PC-9 (cell line): ENCODE measurements at regions of chr19 and their contacts with region 1.

Region 1: DNA sequence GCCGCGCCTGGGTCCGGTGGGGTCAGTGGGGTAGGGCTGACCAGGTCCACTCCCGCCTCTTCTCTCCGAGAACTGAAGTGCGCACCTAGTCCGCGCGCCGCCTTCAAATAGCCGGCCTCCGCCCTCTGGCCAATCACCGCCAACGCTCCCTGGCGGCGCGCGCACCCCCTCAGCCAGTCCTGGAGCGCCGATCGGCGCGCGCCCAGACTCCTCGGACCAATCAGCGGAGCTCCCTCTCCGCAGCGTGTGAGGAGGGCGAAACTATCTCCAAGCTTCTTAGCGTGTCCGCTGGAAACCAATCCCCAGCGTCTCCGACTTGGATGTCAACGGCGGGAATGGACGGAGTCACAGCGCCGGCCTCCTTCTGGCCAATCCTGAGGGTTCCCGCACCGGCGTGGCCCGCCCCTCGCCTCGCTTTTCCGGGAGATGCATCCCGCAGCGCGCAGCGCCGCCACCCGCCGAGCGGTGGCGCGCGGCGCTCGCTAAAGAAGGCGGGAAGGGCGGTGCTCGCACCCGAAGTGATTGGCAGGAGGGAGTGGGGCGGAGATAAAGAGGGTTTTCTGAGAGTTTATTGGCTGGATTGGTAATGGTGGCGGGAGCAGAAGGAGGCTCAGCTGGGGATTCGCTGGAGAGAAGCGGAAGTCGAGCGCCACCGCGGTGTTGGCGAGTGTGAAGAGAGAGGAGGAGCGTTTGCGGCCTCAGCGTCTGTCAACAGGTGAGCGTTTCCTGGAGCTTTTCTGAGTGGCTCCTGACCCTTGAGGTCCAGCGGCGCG is at the start of gene ASF1B:
- DNase-seq: peak; percentile 98 to 99
- H3K4me3 ChIP-seq: peak within 1 kb of the TSS; percentile 79
- H3K27ac ChIP-seq: peak within 1 kb of the TSS; percentile 80
- H3K4me1 ChIP-seq: peaks cover 29% of the 10 kb centered on the region
- H3K27me3 ChIP-seq: no peaks in the 10 kb centered on the region
- CTCF ChIP-seq: peak; percentile 65
- total RNA-seq, gene ASF1B: 67.4 and 71.2 TPM in 2 replicates

Region 2: GRCh38 chr19:13833330-13834243 is 303.1 kb before region 1 on chr19:
- CTCF ChIA-PET with region 1: interaction called, 11 read pairs
- POLR2A ChIA-PET with region 1: no interaction called
- intact Hi-C with region 1: no loop called
- DNase-seq: peak; percentile 87 to 95
- H3K4me3 ChIP-seq: peak overlapping the region; percentile 22; the same call in 1 of the 2 replicates
- H3K27ac ChIP-seq: peak overlapping the region; percentile 59
- H3K4me1 ChIP-seq: peaks cover 52% of the 10 kb centered on the region
- H3K27me3 ChIP-seq: no peaks in the 10 kb centered on the region
- CTCF ChIP-seq: no peak; the same call in none of the 2 replicates

Region 3: DNA sequence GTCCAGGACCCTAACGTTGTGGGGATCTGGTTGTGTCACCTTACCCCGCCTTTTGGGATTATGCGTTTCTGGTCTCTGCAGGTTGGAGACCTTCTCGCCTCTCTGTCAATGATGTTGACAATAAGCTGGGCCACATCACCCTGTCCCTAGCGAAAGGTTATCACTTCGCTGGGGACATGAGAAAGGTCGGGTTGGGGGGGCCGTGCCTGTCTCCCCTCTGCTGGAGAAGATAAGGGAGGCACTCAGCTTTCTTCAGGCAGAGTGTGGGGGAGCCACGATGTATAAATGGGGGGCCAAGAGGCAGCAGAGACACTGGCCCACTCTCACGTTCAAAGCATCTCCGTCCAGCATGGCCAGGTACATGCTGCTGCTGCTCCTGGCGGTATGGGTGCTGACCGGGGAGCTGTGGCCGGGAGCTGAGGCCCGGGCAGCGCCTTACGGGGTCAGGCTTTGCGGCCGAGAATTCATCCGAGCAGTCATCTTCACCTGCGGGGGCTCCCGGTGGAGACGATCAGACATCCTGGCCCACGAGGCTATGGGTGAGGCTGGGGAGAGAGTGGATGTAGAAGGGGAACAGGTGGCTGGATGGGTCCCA is 108.7 kb before region 1 on chr19 and contains the start of gene RLN3:
- CTCF ChIA-PET with region 1: no interaction called
- POLR2A ChIA-PET with region 1: no interaction called
- intact Hi-C with region 1: no loop called
- DNase-seq: no peak
- H3K4me3 ChIP-seq: no peak within 1 kb of the TSS
- H3K27ac ChIP-seq: no peak within 1 kb of the TSS
- H3K4me1 ChIP-seq: peaks cover 24% of the 10 kb centered on the region
- H3K27me3 ChIP-seq: no peaks in the 10 kb centered on the region
- CTCF ChIP-seq: no peak
- total RNA-seq, gene RLN3: not detected in 2 replicates

Region 4: DNA sequence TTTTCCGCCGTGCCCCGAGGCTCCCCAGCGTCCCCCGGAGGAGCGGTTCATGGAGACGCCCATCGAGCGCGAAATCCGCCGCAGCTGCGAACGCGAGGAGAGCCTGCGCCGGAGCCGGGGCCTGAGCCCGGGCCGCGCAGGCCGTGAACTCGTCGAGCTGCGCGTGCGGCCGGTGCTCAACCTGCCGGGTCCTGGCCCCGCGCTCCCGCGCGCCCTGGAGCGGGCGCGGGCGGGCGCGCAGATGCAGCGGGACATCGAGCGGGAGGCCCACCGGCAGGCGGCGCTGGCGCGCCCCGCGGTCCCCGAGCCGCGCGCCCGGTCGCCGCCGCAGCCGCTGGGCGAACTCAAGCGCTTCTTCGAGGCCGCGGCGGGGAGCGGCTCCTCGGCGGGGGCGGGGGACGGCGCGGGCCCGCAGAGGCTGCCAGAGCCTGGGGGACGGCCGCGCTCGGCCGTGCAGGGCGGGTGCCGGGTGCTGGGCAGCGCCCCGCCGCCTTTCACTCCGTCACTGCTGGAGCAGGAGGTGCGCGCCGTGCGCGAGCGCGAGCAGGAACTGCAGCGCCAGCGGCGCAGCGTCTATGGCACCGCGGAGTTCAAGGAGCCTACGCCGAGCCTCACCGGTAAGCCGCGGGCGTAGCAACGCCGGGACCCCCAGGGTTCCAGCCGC is 63.3 kb before region 1 on chr19:
- CTCF ChIA-PET with region 1: interaction called, 7 read pairs
- POLR2A ChIA-PET with region 1: no interaction called
- intact Hi-C with region 1: loop called (anchors 1 kb)
- DNase-seq: peak; percentile 61 to 78
- H3K4me3 ChIP-seq: peak overlapping the region; percentile 72
- H3K27ac ChIP-seq: no peak overlapping the region
- H3K4me1 ChIP-seq: 0 out of 2 replicates have a peak, but pooled peaks cover 10% of the 10 kb centered on the region
- H3K27me3 ChIP-seq: no peaks in the 10 kb centered on the region
- CTCF ChIP-seq: no peak

Region 5: DNA sequence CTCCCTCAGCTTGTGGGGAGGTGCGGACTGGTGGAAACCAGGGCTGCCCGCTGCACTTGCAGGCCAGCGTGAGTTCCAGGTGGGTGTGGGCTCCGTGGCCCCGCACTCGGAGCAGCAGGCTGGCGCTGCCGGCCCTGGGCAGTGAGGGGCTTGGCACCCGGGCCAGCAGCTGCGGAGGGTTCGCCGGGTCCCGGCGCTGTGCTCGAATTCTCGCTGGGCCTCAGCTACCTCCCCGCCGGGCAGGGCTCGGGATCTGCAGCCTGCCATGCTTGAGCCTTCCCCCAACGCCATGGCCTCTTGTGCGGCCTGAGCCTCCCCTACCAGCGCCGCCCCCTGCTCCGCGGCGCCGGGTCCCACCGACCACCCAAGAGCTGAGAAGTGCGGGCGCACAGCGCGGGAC is 140.9 kb after region 1 on chr19:
- CTCF ChIA-PET with region 1: no interaction called
- POLR2A ChIA-PET with region 1: no interaction called
- intact Hi-C with region 1: no loop called
- DNase-seq: no peak
- H3K4me3 ChIP-seq: no peak overlapping the region
- H3K27ac ChIP-seq: no peak overlapping the region
- H3K4me1 ChIP-seq: no peaks in the 10 kb centered on the region
- H3K27me3 ChIP-seq: peaks cover 41% of the 10 kb centered on the region
- CTCF ChIP-seq: no peak

Region 6: DNA sequence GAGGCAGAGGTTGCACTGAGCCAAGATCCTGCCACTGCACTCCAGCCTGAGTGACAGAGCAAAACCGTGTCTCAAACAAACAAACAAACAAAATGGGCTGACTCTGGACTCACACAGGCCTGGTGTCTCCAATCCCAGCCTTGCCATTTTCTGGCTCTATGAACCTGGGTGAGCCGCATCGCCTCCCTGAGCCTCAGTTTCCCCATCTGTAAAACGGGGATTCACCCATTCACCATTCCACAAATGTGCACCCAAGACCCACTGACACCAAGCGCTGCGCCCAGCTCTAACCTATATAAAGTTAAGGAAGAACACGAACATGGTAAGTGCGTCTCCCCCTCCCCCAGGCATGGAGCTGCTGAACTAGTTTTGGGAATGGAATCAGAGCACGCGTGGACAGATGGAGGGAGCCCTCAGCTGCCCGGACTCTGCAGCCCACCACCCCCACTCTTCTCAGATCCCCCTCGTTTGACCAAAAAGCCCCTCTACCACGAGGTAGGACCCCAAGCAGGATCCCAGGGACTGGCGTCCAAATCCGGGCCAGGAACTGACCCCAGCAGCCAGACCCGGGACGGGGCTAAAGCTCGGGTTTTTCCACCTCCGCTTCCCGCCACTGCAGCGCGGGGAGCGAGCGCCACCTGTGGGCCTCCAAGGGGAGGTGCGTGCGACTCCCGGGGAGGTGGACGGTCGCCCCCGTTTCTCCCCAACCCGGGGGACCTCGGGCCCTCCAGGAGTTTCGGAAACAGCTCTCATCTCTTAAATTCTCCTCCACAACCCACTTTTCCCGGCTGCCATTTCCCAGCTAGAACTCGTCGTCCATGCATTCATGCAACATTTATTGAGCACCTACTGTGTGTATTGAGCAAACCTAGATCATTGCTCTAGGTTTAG is 211.5 kb after region 1 on chr19:
- CTCF ChIA-PET with region 1: no interaction called
- POLR2A ChIA-PET with region 1: no interaction called
- intact Hi-C with region 1: loop called (anchors 2 kb)
- DNase-seq: peak in 1 of 2 experiments; percentile 65
- H3K4me3 ChIP-seq: peak overlapping the region; percentile 29; the same call in 1 of the 2 replicates
- H3K27ac ChIP-seq: no peak overlapping the region
- H3K4me1 ChIP-seq: no peaks in the 10 kb centered on the region
- H3K27me3 ChIP-seq: no peaks in the 10 kb centered on the region
- CTCF ChIP-seq: peak; percentile 99

Region 7: DNA sequence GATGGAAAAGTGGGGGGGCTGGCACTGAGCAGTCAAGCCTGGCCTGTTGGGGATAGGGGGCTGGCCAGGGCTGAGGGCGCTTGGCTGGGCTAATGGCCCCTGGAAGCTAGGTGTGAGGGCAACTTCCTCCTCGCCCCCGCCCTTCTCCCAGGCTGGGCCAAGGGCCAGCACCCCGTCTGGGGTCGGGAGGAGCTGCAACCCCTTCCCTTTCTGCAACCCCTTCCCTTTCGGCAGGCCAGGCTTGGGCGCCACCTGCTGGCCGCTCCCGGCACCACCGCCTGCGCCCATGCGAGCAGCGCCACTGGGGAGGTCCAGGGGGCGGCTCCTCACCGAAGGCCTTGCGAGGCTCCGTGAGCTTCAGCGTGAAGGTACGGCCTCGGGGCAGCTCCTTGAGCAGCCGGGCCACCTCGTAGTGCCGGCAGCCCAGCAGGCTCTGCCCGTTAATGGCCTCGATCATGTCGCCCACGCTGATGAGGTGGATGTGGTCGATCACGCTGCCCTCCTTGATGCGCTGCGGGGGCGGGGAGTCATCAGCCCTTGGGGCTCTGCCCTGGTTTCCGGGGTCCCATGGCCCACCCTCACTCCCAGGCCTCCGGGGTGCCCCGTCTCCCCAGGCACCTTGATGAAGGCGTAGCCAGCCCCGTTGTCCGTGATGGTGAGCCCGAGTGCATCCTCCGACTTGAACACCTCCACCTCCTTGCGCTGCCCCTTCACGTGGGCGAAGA is 343.4 kb after region 1 on chr19:
- CTCF ChIA-PET with region 1: no interaction called
- POLR2A ChIA-PET with region 1: interaction called, 4 read pairs
- intact Hi-C with region 1: loop called (anchors 5 kb)
- DNase-seq: peak in 1 of 2 experiments; percentile 47
- H3K4me3 ChIP-seq: no peak overlapping the region
- H3K27ac ChIP-seq: no peak overlapping the region
- H3K4me1 ChIP-seq: peaks cover 30% of the 10 kb centered on the region
- H3K27me3 ChIP-seq: no peaks in the 10 kb centered on the region
- CTCF ChIP-seq: peak; percentile 94

Region 8: DNA sequence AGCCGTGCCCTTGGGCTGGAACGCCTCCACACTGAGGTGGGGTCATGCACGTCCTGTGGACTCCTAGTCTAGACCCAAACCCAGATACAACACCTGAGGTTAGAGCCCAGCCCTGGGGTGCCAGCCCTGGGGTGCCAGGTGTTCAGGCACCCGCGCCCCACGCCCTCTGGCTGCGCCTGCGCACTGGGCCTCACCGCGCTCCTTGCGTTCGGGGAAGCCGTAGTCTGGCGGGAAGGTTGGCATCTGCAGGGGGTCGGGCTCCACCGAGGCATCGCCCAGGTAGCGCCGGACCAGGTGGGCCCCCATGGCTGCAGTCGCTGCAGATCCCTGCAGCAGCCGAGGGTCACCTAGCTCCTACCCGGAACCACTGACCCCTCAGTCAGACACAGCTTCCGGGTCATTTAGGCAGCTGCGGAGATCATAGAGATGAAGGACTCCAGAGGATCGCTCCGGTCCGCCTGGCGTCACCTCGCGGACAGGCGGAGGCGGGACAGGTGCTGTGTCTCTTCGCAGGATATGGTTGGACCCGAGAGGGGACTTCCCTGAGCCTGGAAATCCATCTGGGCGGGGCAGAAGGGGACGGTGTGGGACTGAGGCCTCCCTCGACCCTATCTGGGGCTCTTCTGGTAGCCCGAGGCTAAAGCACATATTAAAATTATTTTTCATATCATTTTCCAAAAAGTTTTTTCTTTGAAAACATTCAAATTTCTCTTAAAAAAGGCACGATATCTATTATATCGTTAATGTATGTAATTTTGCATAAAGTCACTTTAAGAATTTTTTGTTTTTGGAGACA is 435.2 kb after region 1 on chr19 and contains the start of gene NDUFB7:
- CTCF ChIA-PET with region 1: no interaction called
- POLR2A ChIA-PET with region 1: interaction called, 23 read pairs
- intact Hi-C with region 1: loop called (anchors 1 kb)
- DNase-seq: peak; percentile 88 to 93
- H3K4me3 ChIP-seq: peak within 1 kb of the TSS; percentile 66
- H3K27ac ChIP-seq: 0 out of 2 replicates have a peak within 1 kb of the TSS, but pooled peaks have one; percentile 10
- H3K4me1 ChIP-seq: peaks cover 14% of the 10 kb centered on the region
- H3K27me3 ChIP-seq: no peaks in the 10 kb centered on the region
- CTCF ChIP-seq: peak; percentile 69
- total RNA-seq, gene NDUFB7: 192 and 248 TPM in 2 replicates

Region 9: GRCh38 chr19:14804765-14805164 is 668.1 kb after region 1 on chr19:
- CTCF ChIA-PET with region 1: no interaction called
- POLR2A ChIA-PET with region 1: no interaction called
- intact Hi-C with region 1: no loop called
- DNase-seq: no peak
- H3K4me3 ChIP-seq: no peak overlapping the region
- H3K27ac ChIP-seq: no peak overlapping the region
- H3K4me1 ChIP-seq: no peaks in the 10 kb centered on the region
- H3K27me3 ChIP-seq: no peaks in the 10 kb centered on the region
- CTCF ChIP-seq: no peak

Region 10: DNA sequence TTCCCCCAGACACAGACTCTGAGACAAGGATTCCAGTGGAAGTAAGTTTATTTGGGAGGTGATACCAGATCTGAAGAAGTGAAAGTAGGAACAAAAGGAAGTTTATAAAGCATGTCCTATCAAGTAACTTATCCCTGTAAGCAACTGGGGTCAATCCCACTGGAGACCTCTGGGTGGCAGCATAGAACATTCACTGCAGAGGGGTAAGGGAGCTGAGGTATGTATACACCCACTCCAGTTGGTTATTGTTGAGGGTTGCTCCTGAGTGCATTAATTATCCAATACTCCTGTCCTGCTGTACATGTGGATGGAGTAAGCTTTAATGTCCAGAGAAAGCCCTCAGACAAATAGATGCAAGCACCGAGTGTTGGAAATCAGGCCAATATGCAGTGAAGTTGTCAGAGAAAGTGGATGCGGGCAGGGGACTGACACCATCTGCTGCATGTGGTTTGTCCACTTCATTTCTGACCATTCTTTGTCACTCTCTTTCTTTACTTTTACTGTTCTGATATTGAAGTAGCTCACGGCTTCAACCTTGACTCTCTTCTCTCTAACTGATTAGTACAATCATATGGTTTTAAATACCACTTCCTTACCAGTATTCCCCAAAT is 1017.4 kb after region 1 on chr19:
- CTCF ChIA-PET with region 1: no interaction called
- POLR2A ChIA-PET with region 1: no interaction called
- intact Hi-C with region 1: loop called (anchors 5 kb)
- DNase-seq: peak; percentile 64 to 70
- H3K4me3 ChIP-seq: 0 out of 2 replicates have a peak overlapping the region, but pooled peaks have one; percentile 17
- H3K27ac ChIP-seq: no peak overlapping the region
- H3K4me1 ChIP-seq: peaks cover 5% of the 10 kb centered on the region; the same call in 1 of the 2 replicates
- H3K27me3 ChIP-seq: no peaks in the 10 kb centered on the region
- CTCF ChIP-seq: peak; percentile 92